GM12878 (cell line): ENCODE measurements at regions of chr4 and their contacts with region 1.

Region 1: DNA sequence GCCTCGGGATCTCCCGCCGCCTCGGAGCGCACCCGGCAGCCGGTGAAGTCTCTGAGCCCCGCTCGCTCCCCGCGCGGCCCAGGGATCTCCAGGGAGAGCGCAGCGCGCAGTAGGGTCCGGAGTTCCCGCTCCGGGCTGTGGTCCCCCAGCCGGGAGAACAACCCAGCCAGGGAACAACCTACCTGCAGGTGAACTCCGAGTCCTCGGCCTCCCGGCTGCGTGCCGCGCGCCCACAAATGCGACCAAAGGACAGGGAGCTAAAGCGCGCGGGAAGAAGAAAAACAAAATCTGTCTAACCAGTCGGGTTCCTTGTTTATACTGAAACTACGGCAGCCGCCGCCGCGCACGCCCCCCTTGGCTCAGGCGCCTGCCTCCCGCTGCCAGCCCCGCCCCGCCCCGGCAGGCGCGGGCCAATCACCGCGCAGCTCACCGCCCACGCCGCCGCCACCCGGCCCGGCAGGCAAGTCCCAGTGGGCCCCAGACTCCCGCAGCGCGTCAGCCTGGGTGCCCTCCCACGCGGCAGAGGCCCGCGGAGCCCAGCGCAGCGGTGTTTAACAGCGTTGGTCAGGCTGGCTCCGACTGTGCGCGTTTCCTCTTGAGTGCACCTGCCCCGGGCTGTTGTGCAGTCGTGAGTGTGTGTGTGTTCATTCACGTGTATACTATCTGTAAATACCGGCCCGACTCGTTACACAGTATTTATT is at the start of gene RASGEF1B:
- DNase-seq: peak; percentile 16
- ATAC-seq: peak; percentile 98
- H3K4me3 ChIP-seq: peak within 1 kb of the TSS; percentile 63
- H3K27ac ChIP-seq: no peak within 1 kb of the TSS
- H3K4me1 ChIP-seq: peaks cover 13% of the 10 kb centered on the region
- H3K27me3 ChIP-seq: peaks cover 4 to 9% of the 10 kb centered on the region in 2 experiments
- CTCF ChIP-seq: no peak
- EP300 ChIP-seq: peak in 1 of 2 experiments; percentile 22; a peak in 1 of 4 replicates
- POLR2A ChIP-seq: peak; percentile 44; the same call in 1 of the 2 replicates
- RAD21 ChIP-seq: no peak
- polyA plus RNA-seq, gene RASGEF1B: not detected

Region 2: GRCh38 chr4:81405894-81406401 is 65.8 kb before region 1 on chr4:
- CTCF ChIA-PET with region 1: interaction called, 7 read pairs
- POLR2A ChIA-PET with region 1: no interaction called
- RAD21 ChIA-PET with region 1: no interaction called
- SMC1A ChIA-PET with region 1: interaction called, 4 read pairs
- in situ Hi-C with region 1: no loop called
- intact Hi-C with region 1: loop called (anchors 5 kb)
- DNase-seq: peak; percentile 13
- ATAC-seq: peak; percentile 89
- H3K4me3 ChIP-seq: no peak overlapping the region
- H3K27ac ChIP-seq: no peak overlapping the region
- H3K4me1 ChIP-seq: no peaks in the 10 kb centered on the region
- H3K27me3 ChIP-seq: no peaks in the 10 kb centered on the region
- CTCF ChIP-seq: peak; percentile 39 to 56 (median 48)
- EP300 ChIP-seq: no peak
- POLR2A ChIP-seq: no peak
- RAD21 ChIP-seq: peak; percentile 80

Region 3: GRCh38 chr4:81565142-81565870 is 93.6 kb after region 1 on chr4:
- CTCF ChIA-PET with region 1: no interaction called
- POLR2A ChIA-PET with region 1: no interaction called
- RAD21 ChIA-PET with region 1: no interaction called
- SMC1A ChIA-PET with region 1: no interaction called
- in situ Hi-C with region 1: no loop called
- intact Hi-C with region 1: loop called (anchors 5 kb)
- DNase-seq: no peak
- ATAC-seq: 0 out of 3 replicates have a peak, but pooled peaks have one; percentile 21
- H3K4me3 ChIP-seq: no peak overlapping the region
- H3K27ac ChIP-seq: no peak overlapping the region
- H3K4me1 ChIP-seq: peaks cover 28% of the 10 kb centered on the region
- H3K27me3 ChIP-seq: no peaks in the 10 kb centered on the region
- CTCF ChIP-seq: no peak
- EP300 ChIP-seq: no peak
- POLR2A ChIP-seq: no peak
- RAD21 ChIP-seq: no peak

Region 4: DNA sequence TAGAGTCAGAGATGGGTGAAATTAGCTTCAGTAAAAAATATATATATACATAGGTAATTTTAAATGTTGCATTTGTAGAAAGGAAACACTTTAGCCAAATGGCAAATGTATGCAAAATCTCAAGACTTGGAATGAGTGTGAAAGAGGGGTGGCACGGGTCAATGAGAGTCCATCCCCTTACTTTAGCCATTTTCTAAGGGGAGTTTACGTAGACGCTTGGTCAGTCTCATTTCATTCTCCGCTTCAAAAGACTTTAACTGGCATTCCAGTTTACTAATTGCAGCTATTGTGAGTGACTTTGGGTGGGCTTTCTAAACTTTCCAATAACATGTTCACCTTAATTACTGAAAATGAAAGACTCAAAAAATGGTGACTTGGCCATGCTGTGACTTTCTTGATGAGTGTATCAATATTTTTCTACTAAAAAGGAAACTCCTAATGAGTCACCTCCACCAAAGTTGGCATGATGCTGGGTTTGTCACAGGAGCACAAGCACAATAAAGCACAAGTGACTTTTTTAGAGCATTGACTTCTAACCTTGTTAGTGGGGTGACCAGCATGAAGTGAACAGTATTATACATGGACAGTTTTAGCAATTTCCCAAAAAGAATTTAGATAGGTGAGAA is 356.0 kb after region 1 on chr4:
- CTCF ChIA-PET with region 1: interaction called, 3 read pairs
- POLR2A ChIA-PET with region 1: no interaction called
- RAD21 ChIA-PET with region 1: no interaction called
- SMC1A ChIA-PET with region 1: no interaction called
- in situ Hi-C with region 1: no loop called
- intact Hi-C with region 1: loop called (anchors 5 kb)
- DNase-seq: peak; percentile 20
- ATAC-seq: peak; percentile 84
- H3K4me3 ChIP-seq: no peak overlapping the region
- H3K27ac ChIP-seq: no peak overlapping the region
- H3K4me1 ChIP-seq: no peaks in the 10 kb centered on the region
- H3K27me3 ChIP-seq: no peaks in the 10 kb centered on the region; a peak in 1 of 4 replicates
- CTCF ChIP-seq: no peak
- EP300 ChIP-seq: no peak
- POLR2A ChIP-seq: no peak
- RAD21 ChIP-seq: no peak

Region 5: DNA sequence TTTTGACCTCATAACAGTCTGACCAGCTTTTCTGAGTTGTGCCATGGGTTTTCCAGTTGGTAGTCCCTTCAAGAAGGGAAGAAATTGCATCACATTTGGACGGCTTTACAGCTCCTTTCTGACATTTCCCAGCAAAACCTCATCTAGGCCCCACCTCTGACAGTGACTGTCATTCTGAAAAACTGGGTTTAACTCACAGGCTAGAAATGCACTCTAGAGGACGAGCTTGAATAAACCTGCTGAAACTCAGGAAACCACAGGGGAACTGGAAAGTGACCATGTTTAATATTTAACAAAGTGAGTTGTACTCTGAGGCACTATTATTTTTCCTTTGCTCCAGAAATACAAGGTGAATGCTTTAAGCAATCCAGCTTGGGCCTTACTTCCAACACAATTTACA is 434.2 kb after region 1 on chr4:
- CTCF ChIA-PET with region 1: no interaction called
- POLR2A ChIA-PET with region 1: no interaction called
- RAD21 ChIA-PET with region 1: no interaction called
- SMC1A ChIA-PET with region 1: no interaction called
- in situ Hi-C with region 1: no loop called
- intact Hi-C with region 1: loop called (anchors 2 kb)
- DNase-seq: peak; percentile 37
- ATAC-seq: peak; percentile 97
- H3K4me3 ChIP-seq: no peak overlapping the region
- H3K27ac ChIP-seq: no peak overlapping the region
- H3K4me1 ChIP-seq: 0 out of 2 replicates have a peak, but pooled peaks cover 4% of the 10 kb centered on the region
- H3K27me3 ChIP-seq: no peaks in the 10 kb centered on the region
- CTCF ChIP-seq: no peak
- EP300 ChIP-seq: no peak
- POLR2A ChIP-seq: no peak
- RAD21 ChIP-seq: no peak

Region 6: DNA sequence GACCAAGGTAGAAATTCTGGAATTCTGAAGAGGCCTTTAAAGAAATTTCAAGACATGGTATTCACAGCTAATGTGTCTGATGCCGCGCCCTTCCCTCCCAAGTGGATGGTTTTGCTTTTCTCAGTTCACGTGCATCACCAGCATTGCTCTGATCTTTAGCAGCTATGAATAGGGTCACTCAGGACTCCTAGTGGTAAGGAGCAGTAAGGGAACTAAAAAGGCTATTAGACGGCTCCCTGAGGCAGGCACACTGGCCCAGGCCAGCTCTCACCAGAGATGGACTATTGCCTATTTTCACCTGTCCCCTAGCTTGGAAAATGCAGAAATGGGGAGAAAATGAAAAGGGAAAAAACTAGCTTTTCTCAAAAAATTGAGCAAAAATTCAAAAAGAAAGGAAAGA is 447.5 kb after region 1 on chr4:
- CTCF ChIA-PET with region 1: interaction called, 11 read pairs
- POLR2A ChIA-PET with region 1: no interaction called
- RAD21 ChIA-PET with region 1: interaction called, 3 read pairs
- SMC1A ChIA-PET with region 1: interaction called, 4 read pairs
- in situ Hi-C with region 1: no loop called
- intact Hi-C with region 1: no loop called
- DNase-seq: no peak
- ATAC-seq: peak; percentile 93
- H3K4me3 ChIP-seq: no peak overlapping the region
- H3K27ac ChIP-seq: no peak overlapping the region
- H3K4me1 ChIP-seq: no peaks in the 10 kb centered on the region
- H3K27me3 ChIP-seq: no peaks in the 10 kb centered on the region
- CTCF ChIP-seq: peak; percentile 14 to 29 (median 27); a peak in 2 of 6 replicates
- EP300 ChIP-seq: no peak
- POLR2A ChIP-seq: no peak
- RAD21 ChIP-seq: 0 out of 2 replicates have a peak, but pooled peaks have one; percentile 9

Region 7: GRCh38 chr4:82268050-82268825 is 796.5 kb after region 1 on chr4:
- CTCF ChIA-PET with region 1: interaction called, 18 read pairs
- POLR2A ChIA-PET with region 1: no interaction called
- RAD21 ChIA-PET with region 1: interaction called, 3 read pairs
- SMC1A ChIA-PET with region 1: interaction called, 4 read pairs
- in situ Hi-C with region 1: no loop called
- intact Hi-C with region 1: loop called (anchors 2 kb)
- DNase-seq: no peak
- ATAC-seq: peak; percentile 97
- H3K4me3 ChIP-seq: no peak overlapping the region
- H3K27ac ChIP-seq: no peak overlapping the region
- H3K4me1 ChIP-seq: no peaks in the 10 kb centered on the region
- H3K27me3 ChIP-seq: no peaks in the 10 kb centered on the region; a peak in 1 of 4 replicates
- CTCF ChIP-seq: peak; percentile 72 to 85 (median 72)
- EP300 ChIP-seq: no peak
- POLR2A ChIP-seq: no peak
- RAD21 ChIP-seq: peak; percentile 81